A549 (cell line): ENCODE measurements at regions of chrX and their contacts with region 1.

Region 1: GRCh38 chrX:8815464-8816065 is 14.4 kb upstream of the FAM9A start:
- DNase-seq: peak; percentile 40 to 45
- ATAC-seq: peak; percentile 62 to 79; a peak in 4 of 6 replicates
- H3K4me3 ChIP-seq: no peak overlapping the region
- H3K27ac ChIP-seq: no peak overlapping the region
- H3K4me1 ChIP-seq: no peaks in the 10 kb centered on the region
- CTCF ChIP-seq: peak; percentile 69
- EP300 ChIP-seq: no peak
- POLR2A ChIP-seq: no peak
- RAD21 ChIP-seq: peak; percentile 60 to 61

Region 2: GRCh38 chrX:8663325-8663724 is 152.2 kb before region 1 on chrX:
- CTCF ChIA-PET with region 1: no interaction called
- POLR2A ChIA-PET with region 1: no interaction called
- DNase-seq: no peak
- ATAC-seq: no peak
- H3K4me3 ChIP-seq: no peak overlapping the region
- H3K27ac ChIP-seq: no peak overlapping the region
- H3K4me1 ChIP-seq: no peaks in the 10 kb centered on the region
- CTCF ChIP-seq: no peak
- EP300 ChIP-seq: no peak
- POLR2A ChIP-seq: no peak
- RAD21 ChIP-seq: no peak

Region 3: GRCh38 chrX:8748855-8749254 is 66.7 kb before region 1 on chrX:
- CTCF ChIA-PET with region 1: interaction called, 23 read pairs
- POLR2A ChIA-PET with region 1: no interaction called
- DNase-seq: peak; percentile 39 to 43
- ATAC-seq: peak; percentile 84 to 88
- H3K4me3 ChIP-seq: no peak overlapping the region
- H3K27ac ChIP-seq: no peak overlapping the region
- H3K4me1 ChIP-seq: no peaks in the 10 kb centered on the region
- CTCF ChIP-seq: peak; percentile 50
- EP300 ChIP-seq: no peak
- POLR2A ChIP-seq: no peak
- RAD21 ChIP-seq: peak; percentile 46 to 49; a peak in 3 of 5 replicates

Region 4: GRCh38 chrX:9267415-9267814 is 451.9 kb after region 1 on chrX:
- CTCF ChIA-PET with region 1: no interaction called
- POLR2A ChIA-PET with region 1: no interaction called
- DNase-seq: peak; percentile 4 to 65
- ATAC-seq: peak; percentile 68 to 73; a peak in 5 of 6 replicates
- H3K4me3 ChIP-seq: no peak overlapping the region
- H3K27ac ChIP-seq: no peak overlapping the region
- H3K4me1 ChIP-seq: peaks cover 12% of the 10 kb centered on the region
- CTCF ChIP-seq: no peak
- EP300 ChIP-seq: peak in 1 of 2 experiments; percentile 28; a peak in 1 of 5 replicates
- POLR2A ChIP-seq: no peak
- RAD21 ChIP-seq: peak in 1 of 2 experiments; percentile 30; a peak in 1 of 5 replicates

Region 5: DNA sequence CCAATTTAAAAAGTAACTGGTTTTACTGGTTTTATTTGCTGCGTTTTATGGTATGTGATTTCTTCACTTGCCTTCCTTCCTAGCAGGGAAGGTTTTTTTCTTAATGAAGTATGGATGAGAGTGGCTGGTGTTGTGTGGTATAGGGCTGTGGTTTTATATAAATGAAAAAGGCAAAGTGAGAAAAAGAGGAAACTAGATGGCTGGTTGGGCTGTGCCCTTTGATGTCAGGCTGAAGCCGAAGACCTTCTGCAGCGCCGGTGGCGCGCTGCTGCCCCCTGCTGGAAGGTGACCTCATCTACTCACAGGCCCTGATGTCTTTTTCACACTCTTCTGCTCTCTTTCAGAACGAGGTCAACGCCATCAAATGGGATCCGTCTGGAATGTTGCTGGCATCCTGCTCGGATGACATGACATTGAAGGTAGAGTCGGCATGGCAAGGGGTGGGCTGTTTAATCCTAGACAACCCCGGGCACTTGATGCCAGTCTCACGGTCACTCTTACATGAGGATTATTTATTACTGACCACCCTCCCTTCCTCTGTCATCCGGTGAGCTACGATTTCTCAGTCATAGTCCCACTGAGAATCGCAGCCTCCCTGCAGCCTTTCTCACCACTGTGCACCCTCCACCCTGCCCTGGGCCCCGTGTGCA is 893.5 kb after region 1 on chrX:
- CTCF ChIA-PET with region 1: interaction called, 17 read pairs
- POLR2A ChIA-PET with region 1: no interaction called
- DNase-seq: peak; percentile 64
- ATAC-seq: peak; percentile 89 to 97
- H3K4me3 ChIP-seq: no peak overlapping the region
- H3K27ac ChIP-seq: 0 out of 6 replicates have a peak overlapping the region, but pooled peaks of 1 of the 2 experiments have one; percentile 53
- H3K4me1 ChIP-seq: no peaks in the 10 kb centered on the region
- CTCF ChIP-seq: peak; percentile 80
- EP300 ChIP-seq: no peak
- POLR2A ChIP-seq: no peak
- RAD21 ChIP-seq: peak; percentile 88 to 93